Mucosa of descending colon (tissue), 3 donors: ENCODE measurements at regions of chr17 and their contacts with region 1.

Region 1: GRCh38 chr17:37650419-37651003 is 7.3 kb upstream of the DDX52 start:
- DNase-seq: peak in 1 of 3 donors; percentile 63
- ATAC-seq: peak; percentile 70
- H3K4me3 ChIP-seq: no peak overlapping the region
- H3K4me1 ChIP-seq: no peaks in the 10 kb centered on the region
- CTCF ChIP-seq: peak; percentile 13

Region 2: GRCh38 chr17:37787055-37787757 is 136.7 kb after region 1 on chr17:
- intact Hi-C with region 1: loop called in 1 of 2 experiments (anchors 10 kb)
- DNase-seq: peak; percentile 88 to 92 (median 90)
- ATAC-seq: peak; percentile 87
- H3K4me3 ChIP-seq: no peak overlapping the region
- H3K4me1 ChIP-seq: peaks cover 16% of the 10 kb centered on the region
- CTCF ChIP-seq: no peak

Region 3: GRCh38 chr17:37818689-37819088 is 168.2 kb after region 1 on chr17:
- intact Hi-C with region 1: loop called in 1 of 2 experiments (anchors 10 kb)
- DNase-seq: peak in 2 of 3 donors; percentile 34 to 36
- ATAC-seq: peak; percentile 86
- H3K4me3 ChIP-seq: no peak overlapping the region
- H3K4me1 ChIP-seq: no peaks in the 10 kb centered on the region
- CTCF ChIP-seq: no peak